Caco-2 (cell line): ENCODE measurements at regions of chr11 and their contacts with region 1.

Region 1: GRCh38 chr11:17238391-17238790 is 30.6 kb upstream of the PIK3C2A start:
- DNase-seq: peak in 1 of 2 experiments; percentile 10
- H3K4me3 ChIP-seq: no peak overlapping the region
- H3K4me3 Mint-ChIP-seq: no peak overlapping the region
- H3K27ac Mint-ChIP-seq: no peak overlapping the region
- H3K4me1 ChIP-seq: peaks cover 9% of the 10 kb centered on the region
- H3K4me1 Mint-ChIP-seq: no peaks in the 10 kb centered on the region
- H3K27me3 ChIP-seq: no peaks in the 10 kb centered on the region
- H3K27me3 Mint-ChIP-seq: no peaks in the 10 kb centered on the region
- CTCF ChIP-seq: no peak

Region 2: GRCh38 chr11:17276236-17277023 is 38.0 kb after region 1 on chr11 and contains the start of gene NUCB2:
- CTCF ChIA-PET with region 1: no interaction called
- POLR2A ChIA-PET with region 1: no interaction called
- intact Hi-C with region 1: loop called (anchors 5 kb)
- DNase-seq: peak; percentile 98 to 99
- H3K4me3 ChIP-seq: peak within 1 kb of the TSS; percentile 86
- H3K4me3 Mint-ChIP-seq: peak within 1 kb of the TSS; percentile 97
- H3K27ac Mint-ChIP-seq: peak within 1 kb of the TSS; percentile 21
- H3K4me1 ChIP-seq: peaks cover 14% of the 10 kb centered on the region; the same call in 1 of the 2 replicates
- H3K4me1 Mint-ChIP-seq: peaks cover 7% of the 10 kb centered on the region
- H3K27me3 ChIP-seq: no peaks in the 10 kb centered on the region
- H3K27me3 Mint-ChIP-seq: no peaks in the 10 kb centered on the region
- CTCF ChIP-seq: no peak
- total RNA-seq, gene NUCB2: 54.5 and 66.6 TPM in 2 replicates